ENCODE measurements at regions of chr6 and their contacts with region 1.

Region 1: GRCh38 chr6:5260661-5261544 is at the starts of genes FARS2 and LYRM4:
- DNase-seq: peak; percentile 89
- H3K4me3 Mint-ChIP-seq: peak within 1 kb of the TSS; percentile 93
- H3K27ac Mint-ChIP-seq: peak within 1 kb of the TSS; percentile 100
- H3K4me1 Mint-ChIP-seq: peaks cover 41% of the 10 kb centered on the region
- H3K27me3 Mint-ChIP-seq: no peaks in the 10 kb centered on the region
- total RNA-seq, gene FARS2: 20.8 and 23.8 TPM in 2 replicates
- total RNA-seq, gene LYRM4: 47.1 and 48.9 TPM in 2 replicates

Region 2: GRCh38 chr6:4775584-4776494 is 485.1 kb before region 1 on chr6 and contains the start of gene CDYL:
- intact Hi-C with region 1: loop called (anchors 1 kb)
- DNase-seq: peak; percentile 87
- H3K4me3 Mint-ChIP-seq: peak within 1 kb of the TSS; percentile 89
- H3K27ac Mint-ChIP-seq: peak within 1 kb of the TSS; percentile 83
- H3K4me1 Mint-ChIP-seq: peaks cover 47% of the 10 kb centered on the region
- H3K27me3 Mint-ChIP-seq: peaks cover 34% of the 10 kb centered on the region
- total RNA-seq, gene CDYL: 26.8 and 29.5 TPM in 2 replicates

Region 3: DNA sequence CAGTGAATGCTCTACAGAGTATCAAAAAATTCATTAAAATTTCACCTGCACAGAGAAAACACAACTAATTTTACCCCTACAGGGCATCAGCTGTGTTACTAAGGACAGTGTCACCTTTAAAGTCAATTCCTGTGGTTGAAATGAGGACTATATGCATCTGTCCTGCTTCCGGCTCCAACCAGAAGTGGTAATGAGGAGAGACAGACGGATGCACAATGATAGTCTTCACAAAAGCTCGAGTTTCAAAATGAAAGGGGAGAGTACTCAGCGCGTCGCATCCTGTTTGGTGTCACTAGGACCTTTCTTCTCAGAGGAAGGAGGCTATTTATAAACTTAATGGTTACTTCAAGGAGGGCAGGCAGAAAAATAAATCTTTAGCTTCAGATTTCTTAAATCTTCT is 86.7 kb before region 1 on chr6:
- intact Hi-C with region 1: loop called (anchors 1 kb)
- DNase-seq: peak; percentile 63
- H3K4me3 Mint-ChIP-seq: peak overlapping the region; percentile 45
- H3K27ac Mint-ChIP-seq: peak overlapping the region; percentile 83
- H3K4me1 Mint-ChIP-seq: peaks cover 48% of the 10 kb centered on the region
- H3K27me3 Mint-ChIP-seq: peaks cover 2% of the 10 kb centered on the region

Region 4: GRCh38 chr6:5279891-5280338 is 19.0 kb after region 1 on chr6:
- intact Hi-C with region 1: loop called (anchors 1 kb)
- DNase-seq: peak; percentile 10
- H3K4me3 Mint-ChIP-seq: peak overlapping the region; percentile 13
- H3K27ac Mint-ChIP-seq: peak overlapping the region; percentile 84
- H3K4me1 Mint-ChIP-seq: peaks cover 49% of the 10 kb centered on the region
- H3K27me3 Mint-ChIP-seq: peaks cover 2% of the 10 kb centered on the region

Region 5: GRCh38 chr6:5398530-5398929 is 137.6 kb after region 1 on chr6:
- intact Hi-C with region 1: loop called (anchors 1 kb)
- DNase-seq: no peak
- H3K4me3 Mint-ChIP-seq: no peak overlapping the region
- H3K27ac Mint-ChIP-seq: no peak overlapping the region
- H3K4me1 Mint-ChIP-seq: no peaks in the 10 kb centered on the region
- H3K27me3 Mint-ChIP-seq: no peaks in the 10 kb centered on the region

Region 6: GRCh38 chr6:6131492-6132109 is 870.7 kb after region 1 on chr6:
- intact Hi-C with region 1: no loop called
- DNase-seq: no peak
- H3K4me3 Mint-ChIP-seq: no peak overlapping the region
- H3K27ac Mint-ChIP-seq: no peak overlapping the region
- H3K4me1 Mint-ChIP-seq: no peaks in the 10 kb centered on the region
- H3K27me3 Mint-ChIP-seq: peaks cover 2% of the 10 kb centered on the region